ENCODE measurements at regions of chr15 and their contacts with region 1.

Region 1: DNA sequence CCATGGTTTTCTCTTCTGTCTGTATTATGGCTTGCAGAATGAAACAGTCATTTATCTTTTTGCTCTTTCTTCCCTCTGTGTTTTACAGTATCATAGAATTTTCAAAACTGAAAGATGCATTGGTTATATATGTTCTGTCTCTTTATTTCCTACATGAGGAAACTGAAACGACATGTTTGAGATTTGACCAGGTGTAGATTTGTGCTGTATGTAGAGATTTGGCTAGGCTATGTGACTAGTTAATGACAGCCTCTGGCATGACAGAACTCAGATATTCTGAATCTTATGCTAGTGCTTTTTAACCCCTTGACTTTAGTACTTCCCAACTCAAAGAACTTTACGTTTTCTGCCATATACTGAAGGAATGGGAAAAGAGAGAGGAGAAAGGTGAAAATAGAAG is 151.0 kb downstream of the TCF12 start:
- DNase-seq: no peak
- H3K4me3 ChIP-seq: no peak overlapping the region
- CTCF ChIP-seq: no peak
- POLR2A ChIP-seq: no peak

Region 2: GRCh38 chr15:57036352-57036751 is 33.1 kb before region 1 on chr15:
- intact Hi-C with region 1: loop called (anchors 1 kb)
- DNase-seq: no peak
- H3K4me3 ChIP-seq: no peak overlapping the region
- CTCF ChIP-seq: no peak
- POLR2A ChIP-seq: no peak

Region 3: DNA sequence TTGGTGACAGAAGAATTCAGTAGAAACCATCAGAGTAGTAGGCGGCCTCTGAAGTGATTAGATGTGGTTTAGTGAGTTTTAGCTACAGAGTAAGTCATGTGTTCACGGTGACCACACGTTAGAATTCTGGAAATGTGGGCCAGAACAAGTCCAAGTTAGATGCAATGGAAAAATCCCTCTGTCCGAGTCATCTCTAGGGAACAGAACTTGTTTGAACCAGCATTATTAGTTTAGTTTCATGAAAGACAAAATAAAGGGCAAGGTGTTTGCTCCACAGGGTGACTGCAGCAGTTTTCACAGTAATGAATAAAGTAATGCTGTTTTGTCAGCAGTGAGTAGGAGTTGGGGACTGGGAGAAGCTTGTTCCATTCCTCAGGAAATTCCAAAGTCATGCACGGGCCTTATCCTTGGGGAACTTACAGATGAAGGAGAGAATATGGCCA is 407.1 kb after region 1 on chr15:
- intact Hi-C with region 1: no loop called
- DNase-seq: no peak
- H3K4me3 ChIP-seq: no peak overlapping the region
- CTCF ChIP-seq: no peak
- POLR2A ChIP-seq: no peak

Measured in lower leg skin (tissue), 4 donors.